ENCODE measurements at regions of chr1 and their contacts with region 1.

Region 1: GRCh38 chr1:6784560-6785317 is 515 bp upstream of the CAMTA1 start:
- DNase-seq: peak; percentile 100
- H3K4me3 ChIP-seq: peak overlapping the region; percentile 96
- H3K27ac ChIP-seq: peak overlapping the region; percentile 71
- H3K4me1 ChIP-seq: peaks cover 35% of the 10 kb centered on the region
- CTCF ChIP-seq: no peak

Region 2: DNA sequence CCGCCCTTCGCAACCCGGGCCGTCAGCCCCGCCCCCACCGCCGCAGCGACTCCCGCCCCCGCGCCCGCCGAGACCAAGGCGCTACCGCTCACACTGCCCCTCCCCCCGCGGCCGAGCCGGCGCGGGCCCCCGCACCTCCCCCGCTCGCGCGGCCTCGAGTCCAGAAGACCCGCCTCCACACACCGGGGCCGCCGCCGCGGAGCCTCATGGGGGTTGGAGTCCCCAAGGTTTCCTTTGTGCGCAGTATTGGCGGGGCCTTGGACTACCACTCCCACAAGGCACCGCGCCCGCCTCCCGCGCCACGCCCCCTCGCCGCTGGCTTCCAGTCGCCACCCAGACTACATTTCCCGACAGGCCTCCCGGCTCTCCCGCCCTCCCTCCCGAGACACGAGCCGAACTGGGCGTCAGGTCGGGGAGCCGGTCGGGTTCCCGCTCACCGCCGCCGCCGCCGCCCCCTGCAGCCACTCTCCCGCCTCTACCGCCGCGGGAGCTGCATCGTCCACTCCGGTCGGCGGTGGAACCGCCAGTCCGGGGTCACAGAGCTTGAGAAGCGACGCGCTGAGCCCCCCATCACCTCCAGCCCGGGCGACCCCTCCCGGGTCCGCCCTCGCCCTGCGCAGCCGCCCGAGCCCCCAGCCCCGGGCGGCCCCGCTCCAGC is 171.2 kb before region 1 on chr1 and contains the start of gene PHF13:
- CTCF ChIA-PET with region 1: no interaction called
- POLR2A ChIA-PET with region 1: no interaction called
- intact Hi-C with region 1: no loop called
- DNase-seq: peak; percentile 99
- H3K4me3 ChIP-seq: peak within 1 kb of the TSS; percentile 94
- H3K27ac ChIP-seq: peak within 1 kb of the TSS; percentile 20
- H3K4me1 ChIP-seq: peaks cover 17% of the 10 kb centered on the region
- CTCF ChIP-seq: no peak
- total RNA-seq, gene PHF13: 5.3 and 7.9 TPM in 2 replicates

Region 3: DNA sequence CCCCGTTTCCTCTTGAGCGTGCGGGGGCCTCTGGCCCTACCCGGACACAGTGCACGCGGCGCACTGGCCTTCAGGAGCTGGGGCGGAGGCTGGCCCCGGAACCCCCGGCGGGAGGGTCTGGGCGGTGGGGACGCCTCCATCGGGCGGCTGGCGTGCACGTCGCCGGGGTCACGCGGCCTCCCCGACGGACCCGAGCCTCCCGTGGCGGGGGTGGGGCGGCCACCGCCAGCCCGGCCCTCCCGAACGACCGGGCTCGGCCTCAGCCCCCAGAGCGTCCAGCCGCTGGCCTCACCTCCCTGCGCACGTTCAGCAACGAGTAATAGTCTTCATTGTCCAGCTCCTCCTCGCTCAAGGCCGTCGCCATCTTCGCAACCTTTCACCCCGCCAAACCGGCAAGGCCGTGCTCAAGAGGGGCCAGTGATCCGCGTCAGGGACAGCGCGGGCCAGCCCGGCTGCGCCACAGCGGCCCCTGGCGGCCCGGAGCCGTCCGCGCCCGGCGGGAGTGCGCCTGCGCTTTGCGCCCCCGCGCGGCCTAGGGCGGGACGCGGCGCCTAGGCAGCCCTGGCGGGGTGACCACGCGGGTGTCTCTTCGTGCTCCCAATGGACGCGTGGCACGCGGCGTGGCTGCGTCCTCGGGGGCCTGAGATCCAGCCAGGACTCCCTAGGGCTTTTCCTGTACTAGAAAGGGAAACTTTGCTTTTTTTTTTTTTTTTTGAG is 83.1 kb before region 1 on chr1 and contains the start of gene DNAJC11:
- CTCF ChIA-PET with region 1: no interaction called
- POLR2A ChIA-PET with region 1: no interaction called
- intact Hi-C with region 1: loop called (anchors 5 kb)
- DNase-seq: peak; percentile 92
- H3K4me3 ChIP-seq: peak within 1 kb of the TSS; percentile 97
- H3K27ac ChIP-seq: peak within 1 kb of the TSS; percentile 39
- H3K4me1 ChIP-seq: peaks cover 12% of the 10 kb centered on the region
- CTCF ChIP-seq: peak; percentile 82
- total RNA-seq, gene DNAJC11: 31.0 and 41.6 TPM in 2 replicates

Region 4: DNA sequence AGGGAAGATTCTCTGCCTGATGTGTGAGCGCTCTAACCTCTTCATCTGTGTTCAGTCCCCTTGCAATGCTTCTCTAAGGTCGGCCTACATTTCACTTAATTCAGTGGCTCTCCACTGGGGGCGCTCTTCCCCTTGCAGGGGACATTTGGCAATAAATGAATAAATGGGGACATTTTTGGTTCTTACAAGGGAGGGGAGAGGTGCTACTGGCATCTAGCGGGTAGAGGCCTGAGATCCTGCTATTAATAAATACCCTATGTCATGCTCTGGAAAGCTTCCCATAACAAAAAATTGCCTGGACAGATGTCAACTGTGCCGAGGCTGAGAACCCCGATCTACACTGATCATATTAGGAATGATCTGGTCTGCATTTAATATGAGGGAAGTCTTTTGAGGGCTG is 57.2 kb before region 1 on chr1:
- CTCF ChIA-PET with region 1: interaction called, 4 read pairs
- POLR2A ChIA-PET with region 1: no interaction called
- intact Hi-C with region 1: loop called (anchors 5 kb)
- DNase-seq: peak; percentile 70
- H3K4me3 ChIP-seq: no peak overlapping the region
- H3K27ac ChIP-seq: no peak overlapping the region
- H3K4me1 ChIP-seq: no peaks in the 10 kb centered on the region
- CTCF ChIP-seq: peak; percentile 98

Measured in OCI-LY7 (cell line).